Vagina (tissue), 2 donors: ENCODE measurements at regions of chr1 and their contacts with region 1.

Region 1: GRCh38 chr1:151281969-151282882 is at the start of gene ZNF687:
- DNase-seq: peak; percentile 100
- H3K4me3 ChIP-seq: peak within 1 kb of the TSS; percentile 52 to 81
- H3K27ac ChIP-seq: peak within 1 kb of the TSS; percentile 96
- H3K4me1 ChIP-seq: peaks cover 23% of the 10 kb centered on the region
- H3K27me3 ChIP-seq: no peaks in the 10 kb centered on the region
- CTCF ChIP-seq: no peak
- POLR2A ChIP-seq: peak in 1 of 2 donors; percentile 71
- total RNA-seq, gene ZNF687: 26.8 TPM

Region 2: DNA sequence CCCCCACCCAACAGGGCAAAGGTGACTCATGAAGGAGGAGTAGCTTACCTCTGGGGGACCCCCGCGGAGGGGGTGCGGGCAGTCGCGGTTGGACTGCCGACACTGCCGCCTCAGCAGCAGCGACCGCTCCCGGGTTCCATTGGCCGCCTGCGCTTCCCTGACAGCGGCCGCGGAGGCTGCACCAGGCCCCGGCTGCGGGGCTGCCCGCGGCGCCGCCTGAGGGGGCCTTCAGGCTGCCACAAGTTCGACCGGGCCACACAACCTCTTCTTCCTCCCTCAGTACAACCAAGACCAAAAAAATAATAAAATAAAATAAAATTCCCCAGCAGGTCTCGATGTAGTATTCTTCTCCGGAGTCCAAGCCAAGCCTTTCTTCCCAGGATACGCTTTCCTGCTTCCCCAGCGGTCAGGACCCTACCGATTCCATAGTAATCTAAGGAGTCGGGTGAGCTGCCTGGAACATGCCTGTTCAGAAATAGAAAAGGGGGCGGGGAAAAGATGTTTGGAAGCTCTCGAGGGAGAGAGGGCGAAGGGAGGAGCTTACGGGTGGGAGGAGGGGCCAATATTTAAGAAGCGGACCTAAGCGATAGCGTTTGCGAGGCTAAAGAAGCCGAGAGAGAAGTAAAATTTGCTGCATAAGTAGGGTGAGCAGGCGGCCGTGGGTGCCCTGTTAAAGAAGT is 45.1 kb after region 1 on chr1 and contains the start of gene PI4KB:
- intact Hi-C with region 1: loop called (anchors 1 kb)
- DNase-seq: peak in 1 of 2 donors; percentile 98
- H3K4me3 ChIP-seq: peak within 1 kb of the TSS; percentile 62 to 86
- H3K27ac ChIP-seq: peak within 1 kb of the TSS; percentile 92
- H3K4me1 ChIP-seq: peaks cover 45% of the 10 kb centered on the region
- H3K27me3 ChIP-seq: no peaks in the 10 kb centered on the region
- CTCF ChIP-seq: no peak
- POLR2A ChIP-seq: no peak
- total RNA-seq, gene PI4KB: 69.0 TPM

Region 3: GRCh38 chr1:151606395-151606794 is 324.2 kb after region 1 on chr1:
- intact Hi-C with region 1: no loop called
- DNase-seq: no peak
- H3K4me3 ChIP-seq: no peak overlapping the region
- H3K27ac ChIP-seq: no peak overlapping the region
- H3K4me1 ChIP-seq: peaks cover 5% of the 10 kb centered on the region
- H3K27me3 ChIP-seq: no peaks in the 10 kb centered on the region
- CTCF ChIP-seq: no peak
- POLR2A ChIP-seq: no peak